Dorsolateral prefrontal cortex (tissue), 120 donors: ENCODE measurements at regions of chr2 and their contacts with region 1.

Region 1: GRCh38 chr2:36966370-36967235 is at the start of gene STRN:
- DNase-seq: peak; percentile 88 to 99 (median 94)
- H3K4me3 ChIP-seq: peak within 1 kb of the TSS; percentile 62 to 100 (median 92)
- H3K27ac ChIP-seq: peak within 1 kb of the TSS; percentile 15 to 94 (median 85)
- H3K27me3 ChIP-seq: no peaks in the 10 kb centered on the region
- CTCF ChIP-seq: peak in 32 of 56 donors; percentile 8 to 57 (median 26)
- total RNA-seq, gene STRN: 30.4 to 88.9 (median 46.0) TPM

Region 2: GRCh38 chr2:36756438-36756837 is 210.2 kb before region 1 on chr2:
- intact Hi-C with region 1: no loop called
- DNase-seq: no peak
- H3K4me3 ChIP-seq: no peak overlapping the region
- H3K27ac ChIP-seq: no peak overlapping the region
- H3K27me3 ChIP-seq: peaks cover 0 to 7% (median 0%) of the 10 kb centered on the region in 45 donors
- CTCF ChIP-seq: no peak

Region 3: DNA sequence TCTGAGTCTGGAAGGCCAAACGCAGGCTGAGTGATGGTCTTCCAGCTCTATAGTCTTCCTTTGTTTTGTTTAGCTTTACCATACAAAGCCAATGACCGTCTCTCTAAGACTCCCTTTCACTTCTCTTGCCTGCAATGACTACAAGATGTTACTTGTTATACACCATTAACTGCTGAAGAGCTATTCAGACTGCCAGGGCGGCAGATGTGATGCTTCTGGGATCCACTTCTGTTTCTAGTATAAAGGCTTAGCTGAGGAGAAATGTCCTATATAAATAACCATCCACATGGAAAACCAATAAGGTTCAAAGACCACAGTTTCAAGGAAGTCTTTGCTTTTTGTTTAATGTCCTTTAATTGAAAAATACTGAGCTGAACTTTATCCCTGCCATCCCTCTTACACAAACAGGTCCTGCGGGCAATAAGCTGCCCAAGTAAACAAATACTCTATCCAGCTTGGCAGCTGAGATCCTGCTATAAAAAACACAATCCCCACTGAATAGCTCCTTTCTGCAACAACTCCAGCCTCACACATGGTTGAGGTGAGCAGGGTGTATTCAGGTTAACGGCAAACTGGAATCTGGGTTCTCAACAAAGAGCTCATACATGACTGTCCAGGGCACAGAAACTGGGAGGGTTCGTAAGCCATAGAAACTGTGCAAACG is 145.5 kb before region 1 on chr2:
- intact Hi-C with region 1: no loop called
- DNase-seq: no peak
- H3K4me3 ChIP-seq: no peak overlapping the region
- H3K27ac ChIP-seq: no peak overlapping the region
- H3K27me3 ChIP-seq: no peaks in the 10 kb centered on the region
- CTCF ChIP-seq: no peak

Region 4: DNA sequence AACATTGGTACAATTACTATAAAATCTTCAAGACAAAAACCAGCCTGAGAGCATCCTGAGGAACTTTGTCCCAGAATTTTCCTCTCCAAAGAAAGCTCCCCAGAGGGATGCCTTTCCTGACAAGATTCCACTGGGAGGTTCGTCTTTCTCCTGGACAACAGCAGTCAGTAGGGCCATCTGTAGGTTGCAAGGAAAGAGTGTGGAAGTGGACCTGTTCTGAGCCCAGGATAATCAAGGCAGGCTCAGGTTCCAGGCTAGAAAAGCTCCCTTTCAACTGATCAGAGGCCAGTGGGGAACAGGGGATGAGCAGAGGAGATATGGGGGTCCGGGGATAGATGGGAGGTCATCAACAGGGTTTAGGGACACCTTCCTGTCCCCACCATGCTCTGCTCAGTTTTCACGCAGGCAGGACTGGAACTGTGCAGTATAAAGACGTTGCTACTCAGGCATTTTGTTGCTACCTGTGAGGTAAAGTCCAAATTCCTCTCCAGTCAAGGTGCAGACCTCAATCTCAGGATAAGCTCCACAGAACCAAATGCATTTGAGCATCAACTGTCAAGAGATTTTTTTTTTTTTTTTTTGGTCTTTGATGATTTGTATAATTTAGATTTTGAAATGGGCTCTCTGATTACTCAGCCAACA is 126.5 kb before region 1 on chr2:
- intact Hi-C with region 1: loop called in 1 of 2 experiments (anchors 5 kb)
- DNase-seq: no peak
- H3K4me3 ChIP-seq: no peak overlapping the region
- H3K27ac ChIP-seq: peak overlapping the region in 15 of 59 donors; percentile 4 to 62 (median 40)
- H3K27me3 ChIP-seq: no peaks in the 10 kb centered on the region
- CTCF ChIP-seq: no peak

Region 5: GRCh38 chr2:36902385-36903120 is 64.0 kb before region 1 on chr2:
- intact Hi-C with region 1: loop called (anchors 5 to 10 kb)
- DNase-seq: no peak
- H3K4me3 ChIP-seq: peak overlapping the region in 57 of 59 donors; percentile 10 to 71 (median 45)
- H3K27ac ChIP-seq: peak overlapping the region in 58 of 59 donors; percentile 21 to 93 (median 83)
- H3K27me3 ChIP-seq: no peaks in the 10 kb centered on the region
- CTCF ChIP-seq: peak in 21 of 56 donors; percentile 8 to 44 (median 20)

Region 6: GRCh38 chr2:37083873-37084794 is 117.5 kb after region 1 on chr2 and contains the starts of genes GPATCH11 and HEATR5B:
- intact Hi-C with region 1: loop called (anchors 5 kb)
- DNase-seq: peak; percentile 90 to 97 (median 94)
- H3K4me3 ChIP-seq: peak within 1 kb of the TSS; percentile 61 to 100 (median 91)
- H3K27ac ChIP-seq: peak within 1 kb of the TSS in 58 of 59 donors; percentile 4 to 93 (median 78)
- H3K27me3 ChIP-seq: no peaks in the 10 kb centered on the region
- CTCF ChIP-seq: peak in 16 of 56 donors; percentile 3 to 36 (median 26)
- total RNA-seq, gene GPATCH11: 11.3 to 24.1 (median 17.3) TPM
- total RNA-seq, gene HEATR5B: 25.4 to 49.0 (median 39.5) TPM

Region 7: DNA sequence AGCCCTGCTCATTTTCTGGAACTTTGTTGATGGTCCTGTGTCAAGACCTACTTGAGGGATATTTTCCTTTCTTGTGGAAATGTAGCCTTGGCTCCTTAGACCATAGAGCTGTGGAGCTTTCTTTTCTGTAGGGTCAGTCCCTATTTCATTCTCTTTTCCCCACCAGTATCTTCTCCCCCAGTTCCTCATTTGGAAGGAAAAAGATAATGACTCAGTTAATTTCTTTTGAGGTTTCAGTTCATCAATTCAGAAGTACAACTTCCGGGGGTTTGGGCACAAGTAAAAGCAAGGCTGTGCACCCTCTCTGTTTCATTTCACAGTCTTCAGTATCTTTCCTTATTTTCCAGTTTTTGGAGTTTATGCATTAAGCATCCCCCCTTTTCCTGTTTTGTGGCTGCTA is 634.1 kb after region 1 on chr2:
- intact Hi-C with region 1: no loop called
- DNase-seq: no peak
- H3K4me3 ChIP-seq: no peak overlapping the region
- H3K27ac ChIP-seq: no peak overlapping the region
- H3K27me3 ChIP-seq: peaks cover 0 to 4% (median 0%) of the 10 kb centered on the region in 45 donors
- CTCF ChIP-seq: no peak